GM10248 (cell line): ENCODE measurements at regions of chr10 and their contacts with region 1.

Region 1: DNA sequence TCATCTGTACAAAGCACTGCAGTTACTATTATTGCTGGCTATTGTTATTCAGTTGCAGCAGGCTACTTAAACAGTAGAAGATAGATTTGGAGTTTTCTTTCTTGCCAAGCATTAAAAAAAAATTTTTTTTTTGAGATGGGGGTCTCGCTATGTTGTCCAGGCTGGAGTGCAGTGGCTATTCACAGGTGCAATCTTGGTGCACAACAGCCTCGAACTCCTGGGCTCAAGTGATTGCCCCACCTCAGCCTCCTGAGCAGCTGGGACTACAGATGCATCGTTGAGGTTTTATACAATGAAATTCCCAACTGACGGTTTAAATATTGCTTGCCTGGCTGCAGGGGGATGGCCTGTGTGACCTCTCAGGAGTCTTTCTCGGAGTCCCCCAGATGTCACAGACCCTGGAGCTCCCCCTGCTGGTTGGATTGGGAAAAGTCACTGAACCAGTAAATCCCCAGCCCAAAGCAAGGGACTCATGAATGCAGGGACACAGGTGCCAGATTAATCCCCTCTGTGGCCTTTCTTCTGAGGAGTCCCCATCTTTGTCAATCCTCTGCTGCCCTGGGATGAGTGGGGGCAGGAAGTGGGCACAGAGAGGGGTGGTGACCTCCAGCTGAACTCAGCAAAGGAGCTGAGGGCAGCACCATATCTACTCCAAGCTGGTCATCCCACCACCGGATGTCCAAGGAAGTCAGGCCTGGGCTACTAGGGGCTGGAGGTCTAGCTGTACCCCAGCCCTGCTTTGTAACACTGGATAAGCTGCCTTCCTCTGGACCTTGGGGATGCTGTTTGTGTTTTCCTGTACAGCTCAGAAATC is 149.6 kb downstream of the C10orf105 start:
- DNase-seq: peak; percentile 84
- CTCF ChIP-seq: peak; percentile 85

Region 2: GRCh38 chr10:71314028-71314693 is 255.8 kb before region 1 on chr10:
- CTCF ChIA-PET with region 1: interaction called, 140 read pairs
- POLR2A ChIA-PET with region 1: no interaction called
- DNase-seq: peak; percentile 84
- CTCF ChIP-seq: peak; percentile 75

Region 3: GRCh38 chr10:71383972-71384687 is 185.9 kb before region 1 on chr10:
- CTCF ChIA-PET with region 1: interaction called, 61 read pairs
- POLR2A ChIA-PET with region 1: no interaction called
- DNase-seq: peak; percentile 79
- CTCF ChIP-seq: peak; percentile 98

Region 4: DNA sequence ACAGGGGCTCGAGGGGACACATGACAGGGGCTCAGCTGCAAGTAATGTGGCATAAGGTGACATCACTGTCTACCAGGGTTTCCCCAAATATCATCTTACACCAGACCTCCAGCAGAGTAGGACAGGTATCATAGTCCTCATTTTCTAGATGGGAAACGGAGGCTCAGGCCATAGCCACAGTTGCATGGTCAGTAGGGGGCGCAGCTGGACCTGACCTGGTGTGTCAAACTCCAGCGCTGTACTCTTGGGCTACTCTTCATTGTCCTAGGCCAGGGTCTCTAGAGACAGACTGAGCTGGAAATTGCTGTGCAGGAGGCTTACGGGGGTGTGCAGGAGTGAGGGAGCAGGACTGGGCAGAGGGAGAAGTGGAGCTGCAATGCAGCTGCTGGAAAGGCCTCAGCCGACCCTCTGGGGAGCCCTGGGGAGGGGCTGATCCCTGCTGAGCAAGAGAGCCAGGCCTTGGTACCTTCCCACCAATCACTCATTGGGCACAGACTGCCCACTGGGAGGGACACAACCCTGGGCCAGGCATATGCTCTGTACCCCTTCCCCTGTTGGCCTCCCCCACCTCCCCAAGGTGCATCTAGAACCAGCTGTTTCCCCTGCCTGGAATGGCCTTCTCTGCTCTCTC is 83.4 kb before region 1 on chr10:
- CTCF ChIA-PET with region 1: interaction called, 13 read pairs
- POLR2A ChIA-PET with region 1: no interaction called
- DNase-seq: peak; percentile 58
- CTCF ChIP-seq: peak; percentile 51

Region 5: GRCh38 chr10:71534568-71535194 is 35.3 kb before region 1 on chr10:
- CTCF ChIA-PET with region 1: no interaction called
- POLR2A ChIA-PET with region 1: no interaction called
- DNase-seq: no peak
- CTCF ChIP-seq: no peak

Region 6: DNA sequence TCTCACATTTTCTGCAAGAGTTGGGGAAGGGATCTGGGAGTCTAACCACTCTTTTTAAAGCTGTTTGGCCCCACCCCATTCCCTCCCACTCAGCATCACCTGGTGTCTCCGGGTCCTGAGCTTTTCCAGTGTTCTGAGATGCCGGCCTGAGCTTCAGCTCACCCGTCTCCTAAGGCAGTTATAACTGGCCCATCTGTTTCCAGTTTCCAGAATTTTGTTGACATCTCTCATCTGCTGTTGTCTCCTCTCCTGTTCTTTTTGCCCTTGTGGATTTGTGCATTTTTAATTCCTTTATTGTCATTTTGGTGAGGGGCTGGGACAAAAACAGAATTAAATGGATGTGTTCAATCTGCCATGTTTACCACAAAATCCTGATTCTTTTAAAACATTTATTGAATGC is 11.0 kb before region 1 on chr10:
- CTCF ChIA-PET with region 1: interaction called, 59 read pairs
- POLR2A ChIA-PET with region 1: no interaction called
- DNase-seq: no peak
- CTCF ChIP-seq: no peak

Region 7: GRCh38 chr10:71708301-71708703 is 138.3 kb after region 1 on chr10:
- CTCF ChIA-PET with region 1: interaction called, 17 read pairs
- POLR2A ChIA-PET with region 1: no interaction called
- DNase-seq: peak; percentile 78
- CTCF ChIP-seq: peak; percentile 87